ENCODE measurements at regions of chr13 and their contacts with region 1.

Region 1: DNA sequence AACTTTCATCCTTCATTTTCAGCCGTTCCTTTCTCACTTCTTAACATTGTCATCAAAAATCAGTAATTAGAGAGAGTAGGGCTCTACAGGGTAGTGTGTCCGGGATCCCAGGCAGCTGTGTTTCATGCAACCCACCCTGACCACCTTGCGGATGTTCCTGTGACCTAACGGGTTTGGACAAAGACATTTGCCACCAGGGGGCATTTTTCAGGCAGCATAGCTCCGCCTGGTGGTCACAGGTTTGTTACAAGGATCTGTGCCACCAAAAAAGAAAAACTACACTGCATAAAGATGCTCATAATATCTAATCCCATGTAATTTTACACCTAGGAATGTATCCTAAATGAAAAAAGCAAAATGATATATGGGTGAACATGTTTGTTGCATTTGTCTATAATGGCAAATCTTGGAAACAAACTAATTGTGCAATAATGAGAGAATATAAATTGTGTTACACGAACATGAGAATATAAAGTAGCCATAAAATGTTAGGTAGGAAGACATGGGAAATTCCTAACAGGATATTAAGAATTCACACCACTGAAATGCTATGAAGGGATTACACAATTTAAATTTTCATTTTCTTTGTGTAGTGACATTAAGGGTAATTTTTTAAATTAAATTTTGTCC is 123.0 kb downstream of the SLC7A1 start:
- DNase-seq: peak; percentile 63
- ATAC-seq: peak; percentile 94
- H3K4me3 ChIP-seq: no peak overlapping the region
- H3K27ac ChIP-seq: no peak overlapping the region
- H3K4me1 ChIP-seq: no peaks in the 10 kb centered on the region
- H3K27me3 ChIP-seq: peaks cover 8% of the 10 kb centered on the region; the same call in 1 of the 2 replicates
- CTCF ChIP-seq: peak; percentile 99 to 100 (median 99)
- POLR2A ChIP-seq: no peak
- RAD21 ChIP-seq: peak; percentile 66

Region 2: DNA sequence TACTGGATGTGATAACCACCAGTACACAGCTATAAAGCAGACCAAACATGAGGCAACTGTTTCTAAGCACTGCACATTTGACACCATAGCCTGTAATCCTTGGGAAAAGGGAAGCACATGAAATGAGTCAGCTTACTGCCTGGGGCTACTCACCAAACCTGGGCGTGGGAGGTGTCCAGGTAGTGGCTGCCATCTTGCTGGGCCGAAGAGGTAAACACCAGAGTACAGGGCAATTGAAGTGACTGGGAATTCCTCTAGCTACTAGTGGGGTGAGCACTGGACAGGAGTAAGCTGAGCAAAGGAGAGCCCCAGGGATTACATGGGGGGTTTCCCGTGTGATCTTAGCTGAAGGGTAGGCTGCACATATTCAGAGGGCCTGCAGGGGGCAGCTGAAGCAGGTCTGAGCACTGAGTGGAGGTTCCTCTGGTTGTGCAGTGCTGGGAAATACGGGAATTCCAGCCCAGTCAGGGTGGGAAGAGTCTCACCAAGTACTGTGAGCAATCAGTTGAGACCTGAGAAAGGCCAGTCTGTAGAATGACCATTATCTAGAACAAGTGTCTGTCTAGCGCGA is 17.5 kb before region 1 on chr13:
- CTCF ChIA-PET with region 1: interaction called, 26 read pairs
- POLR2A ChIA-PET with region 1: no interaction called
- RAD21 ChIA-PET with region 1: interaction called in 1 of 2 experiments, 3 read pairs
- intact Hi-C with region 1: no loop called
- DNase-seq: peak; percentile 24
- ATAC-seq: peak; percentile 95
- H3K4me3 ChIP-seq: no peak overlapping the region
- H3K27ac ChIP-seq: no peak overlapping the region
- H3K4me1 ChIP-seq: peaks cover 10 to 17% of the 10 kb centered on the region in 2 experiments
- H3K27me3 ChIP-seq: peaks cover 6% of the 10 kb centered on the region; the same call in 1 of the 2 replicates
- CTCF ChIP-seq: peak; percentile 28 to 76 (median 67); a peak in 5 of 6 replicates
- POLR2A ChIP-seq: no peak
- RAD21 ChIP-seq: peak; percentile 24; the same call in 1 of the 2 replicates

Region 3: GRCh38 chr13:29484236-29484635 is 11.8 kb after region 1 on chr13:
- CTCF ChIA-PET with region 1: interaction called, 12 read pairs
- POLR2A ChIA-PET with region 1: no interaction called
- RAD21 ChIA-PET with region 1: no interaction called
- intact Hi-C with region 1: no loop called
- DNase-seq: no peak
- ATAC-seq: no peak
- H3K4me3 ChIP-seq: no peak overlapping the region
- H3K27ac ChIP-seq: no peak overlapping the region
- H3K4me1 ChIP-seq: no peaks in the 10 kb centered on the region
- H3K27me3 ChIP-seq: peaks cover 23% of the 10 kb centered on the region
- CTCF ChIP-seq: no peak
- POLR2A ChIP-seq: no peak
- RAD21 ChIP-seq: no peak

Region 4: GRCh38 chr13:29676941-29677452 is 204.6 kb after region 1 on chr13:
- CTCF ChIA-PET with region 1: no interaction called
- POLR2A ChIA-PET with region 1: no interaction called
- RAD21 ChIA-PET with region 1: no interaction called
- intact Hi-C with region 1: no loop called
- DNase-seq: no peak
- ATAC-seq: peak; percentile 32; the same call in 1 of the 2 replicates
- H3K4me3 ChIP-seq: no peak overlapping the region
- H3K27ac ChIP-seq: no peak overlapping the region
- H3K4me1 ChIP-seq: 0 out of 4 replicates have a peak, but pooled peaks cover 0 to 3% of the 10 kb centered on the region in 2 experiments
- H3K27me3 ChIP-seq: peaks cover 9% of the 10 kb centered on the region; the same call in 1 of the 2 replicates
- CTCF ChIP-seq: no peak
- POLR2A ChIP-seq: no peak
- RAD21 ChIP-seq: no peak

Measured in HCT116 (cell line).